Activated B cell treated with CpG ODN at 0.5 μM for 24 hours (primary cell): ENCODE measurements at regions of chr1 and their contacts with region 1.

Region 1: GRCh38 chr1:157773493-157774350 is 3.2 kb downstream of the FCRL2 start:
- DNase-seq: no peak
- ATAC-seq: peak; percentile 80
- H3K4me3 Mint-ChIP-seq: peak overlapping the region; percentile 79
- H3K27ac Mint-ChIP-seq: peak overlapping the region; percentile 87
- H3K4me1 Mint-ChIP-seq: peaks cover 97% of the 10 kb centered on the region
- H3K27me3 Mint-ChIP-seq: no peaks in the 10 kb centered on the region
- CTCF ChIP-seq: peak; percentile 34

Region 2: GRCh38 chr1:157496121-157496526 is 277.6 kb before region 1 on chr1:
- CTCF ChIA-PET with region 1: interaction called, 3 read pairs
- POLR2A ChIA-PET with region 1: no interaction called
- intact Hi-C with region 1: loop called (anchors 5 kb)
- DNase-seq: no peak
- ATAC-seq: peak; percentile 88
- H3K4me3 Mint-ChIP-seq: peak overlapping the region; percentile 44
- H3K27ac Mint-ChIP-seq: peak overlapping the region; percentile 27
- H3K4me1 Mint-ChIP-seq: peaks cover 34% of the 10 kb centered on the region
- H3K27me3 Mint-ChIP-seq: no peaks in the 10 kb centered on the region
- CTCF ChIP-seq: peak; percentile 83

Region 3: GRCh38 chr1:157626099-157626498 is 147.6 kb before region 1 on chr1:
- CTCF ChIA-PET with region 1: no interaction called
- POLR2A ChIA-PET with region 1: no interaction called
- intact Hi-C with region 1: loop called (anchors 2 kb)
- DNase-seq: peak; percentile 36
- ATAC-seq: peak; percentile 78
- H3K4me3 Mint-ChIP-seq: no peak overlapping the region
- H3K27ac Mint-ChIP-seq: no peak overlapping the region
- H3K4me1 Mint-ChIP-seq: peaks cover 16% of the 10 kb centered on the region
- H3K27me3 Mint-ChIP-seq: no peaks in the 10 kb centered on the region
- CTCF ChIP-seq: peak; percentile 47

Region 4: DNA sequence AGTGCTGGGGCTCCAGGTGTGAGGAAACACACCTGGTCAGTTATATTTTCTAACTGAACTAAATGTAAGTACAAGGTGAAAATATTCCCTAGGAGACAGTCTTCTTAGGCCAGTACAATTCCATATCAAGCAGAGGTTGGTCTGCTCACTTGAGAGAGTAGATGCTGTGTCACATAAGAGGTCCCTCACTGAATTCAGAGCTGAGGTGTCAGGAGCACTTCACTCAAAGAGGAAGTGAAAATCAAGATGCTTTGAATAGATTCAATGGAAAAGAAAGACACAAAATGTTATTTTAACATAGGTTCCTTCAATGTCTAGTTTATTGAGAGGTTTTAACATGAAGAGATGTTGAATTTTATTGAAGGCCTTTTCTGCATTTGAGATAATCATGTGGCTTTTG is 68.8 kb before region 1 on chr1:
- CTCF ChIA-PET with region 1: interaction called, 8 read pairs
- POLR2A ChIA-PET with region 1: interaction called, 10 read pairs
- intact Hi-C with region 1: loop called (anchors 2 kb)
- DNase-seq: no peak
- ATAC-seq: peak; percentile 71
- H3K4me3 Mint-ChIP-seq: peak overlapping the region; percentile 42
- H3K27ac Mint-ChIP-seq: peak overlapping the region; percentile 74
- H3K4me1 Mint-ChIP-seq: peaks cover 95% of the 10 kb centered on the region
- H3K27me3 Mint-ChIP-seq: no peaks in the 10 kb centered on the region
- CTCF ChIP-seq: no peak

Region 5: DNA sequence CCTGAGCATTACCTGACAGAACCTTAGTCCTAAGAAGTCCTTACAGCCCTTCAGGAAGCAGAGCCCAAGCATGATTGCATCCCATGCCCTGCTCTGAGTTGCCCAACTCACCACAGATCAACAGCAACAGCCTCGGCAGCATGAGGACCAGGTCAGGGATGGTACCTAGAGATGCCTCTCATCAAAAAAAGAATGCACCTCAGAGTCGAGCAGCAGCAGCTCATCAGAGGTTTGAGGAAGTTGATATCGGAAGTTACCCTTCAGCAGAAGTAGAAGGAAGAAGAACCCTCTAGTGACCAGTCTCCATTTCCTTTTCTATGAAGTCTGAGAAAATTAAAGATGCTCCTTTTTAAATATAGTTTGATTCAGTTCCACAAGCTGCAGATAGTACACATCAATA is 46.2 kb after region 1 on chr1 and contains the start of gene FCRL1:
- CTCF ChIA-PET with region 1: interaction called, 6 read pairs
- POLR2A ChIA-PET with region 1: interaction called, 4 read pairs
- intact Hi-C with region 1: loop called (anchors 1 kb)
- DNase-seq: peak; percentile 33
- ATAC-seq: peak; percentile 88
- H3K4me3 Mint-ChIP-seq: no peak within 1 kb of the TSS
- H3K27ac Mint-ChIP-seq: no peak within 1 kb of the TSS
- H3K4me1 Mint-ChIP-seq: peaks cover 28% of the 10 kb centered on the region
- H3K27me3 Mint-ChIP-seq: no peaks in the 10 kb centered on the region
- CTCF ChIP-seq: no peak
- total RNA-seq, gene FCRL1: 111 and 138 TPM in 2 replicates

Region 6: GRCh38 chr1:157948312-157949073 is 174.8 kb after region 1 on chr1:
- CTCF ChIA-PET with region 1: interaction called, 6 read pairs
- POLR2A ChIA-PET with region 1: no interaction called
- intact Hi-C with region 1: loop called (anchors 1 kb)
- DNase-seq: no peak
- ATAC-seq: peak; percentile 77
- H3K4me3 Mint-ChIP-seq: no peak overlapping the region
- H3K27ac Mint-ChIP-seq: no peak overlapping the region
- H3K4me1 Mint-ChIP-seq: peaks cover 24% of the 10 kb centered on the region
- H3K27me3 Mint-ChIP-seq: peaks cover 6% of the 10 kb centered on the region
- CTCF ChIP-seq: peak; percentile 52

Region 7: GRCh38 chr1:158272681-158273080 is 499.0 kb after region 1 on chr1:
- CTCF ChIA-PET with region 1: no interaction called
- POLR2A ChIA-PET with region 1: no interaction called
- intact Hi-C with region 1: no loop called
- DNase-seq: no peak
- ATAC-seq: no peak
- H3K4me3 Mint-ChIP-seq: no peak overlapping the region
- H3K27ac Mint-ChIP-seq: peak overlapping the region; percentile 30
- H3K4me1 Mint-ChIP-seq: peaks cover 36% of the 10 kb centered on the region
- H3K27me3 Mint-ChIP-seq: no peaks in the 10 kb centered on the region
- CTCF ChIP-seq: no peak